ENCODE measurements at regions of chr1 and their contacts with region 1.

Region 1: GRCh38 chr1:226608699-226609505 is 60.3 kb downstream of the STUM start:
- H3K4me3 ChIP-seq: no peak overlapping the region
- H3K27ac ChIP-seq: no peak overlapping the region
- H3K4me1 ChIP-seq: no peaks in the 10 kb centered on the region
- CTCF ChIP-seq: peak; percentile 68; the same call in 1 of the 2 replicates

Region 2: DNA sequence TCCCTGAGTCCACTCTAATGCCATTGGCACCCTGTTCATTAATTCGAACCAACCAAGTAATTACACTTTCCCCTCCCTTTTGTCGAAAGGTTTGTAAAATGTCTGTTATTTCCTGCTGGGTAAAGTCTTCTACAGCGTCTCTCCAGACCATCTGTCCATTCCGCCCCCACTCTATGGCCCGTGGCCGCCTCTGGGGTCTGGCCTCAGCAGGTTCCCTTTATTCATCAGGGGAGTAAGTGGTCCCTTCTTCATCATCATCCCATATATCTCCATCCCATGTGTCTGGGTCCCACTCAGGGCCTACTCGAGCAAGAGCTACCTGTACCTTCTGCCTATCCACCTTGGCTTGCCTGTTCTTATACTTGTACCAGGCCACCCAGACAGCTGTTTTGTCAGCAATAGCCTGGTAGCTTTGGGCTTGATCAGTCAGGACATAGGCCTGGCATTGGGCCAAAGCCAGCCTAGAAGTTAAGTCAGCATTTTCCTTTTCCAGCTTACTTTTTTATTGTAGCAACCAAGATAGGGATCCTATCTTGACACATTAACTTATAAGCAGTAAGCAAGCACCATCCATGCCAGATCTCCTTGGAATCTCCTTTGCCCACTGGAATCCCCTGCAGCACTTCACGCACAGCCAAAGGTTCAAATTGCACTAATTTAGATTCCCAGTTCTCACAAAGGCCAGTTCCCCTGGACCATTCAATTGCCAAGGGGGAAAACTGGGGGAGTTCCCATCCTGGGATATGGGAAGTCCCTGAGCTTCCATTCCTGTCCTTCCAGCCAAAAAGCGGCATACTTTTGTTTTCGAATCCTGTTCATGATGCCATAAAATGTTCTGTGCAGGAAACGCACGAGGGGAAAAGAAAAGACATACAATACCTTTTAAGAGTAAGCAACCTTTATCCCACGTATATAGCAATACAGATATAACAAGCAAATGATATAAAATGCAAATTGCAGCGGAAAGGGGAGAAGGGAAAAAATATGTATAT is 67.0 kb before region 1 on chr1:
- CTCF ChIA-PET with region 1: interaction called, 84 read pairs
- POLR2A ChIA-PET with region 1: no interaction called
- H3K4me3 ChIP-seq: no peak overlapping the region
- H3K27ac ChIP-seq: no peak overlapping the region
- H3K4me1 ChIP-seq: 0 out of 2 replicates have a peak, but pooled peaks cover 4% of the 10 kb centered on the region
- CTCF ChIP-seq: no peak

Region 3: DNA sequence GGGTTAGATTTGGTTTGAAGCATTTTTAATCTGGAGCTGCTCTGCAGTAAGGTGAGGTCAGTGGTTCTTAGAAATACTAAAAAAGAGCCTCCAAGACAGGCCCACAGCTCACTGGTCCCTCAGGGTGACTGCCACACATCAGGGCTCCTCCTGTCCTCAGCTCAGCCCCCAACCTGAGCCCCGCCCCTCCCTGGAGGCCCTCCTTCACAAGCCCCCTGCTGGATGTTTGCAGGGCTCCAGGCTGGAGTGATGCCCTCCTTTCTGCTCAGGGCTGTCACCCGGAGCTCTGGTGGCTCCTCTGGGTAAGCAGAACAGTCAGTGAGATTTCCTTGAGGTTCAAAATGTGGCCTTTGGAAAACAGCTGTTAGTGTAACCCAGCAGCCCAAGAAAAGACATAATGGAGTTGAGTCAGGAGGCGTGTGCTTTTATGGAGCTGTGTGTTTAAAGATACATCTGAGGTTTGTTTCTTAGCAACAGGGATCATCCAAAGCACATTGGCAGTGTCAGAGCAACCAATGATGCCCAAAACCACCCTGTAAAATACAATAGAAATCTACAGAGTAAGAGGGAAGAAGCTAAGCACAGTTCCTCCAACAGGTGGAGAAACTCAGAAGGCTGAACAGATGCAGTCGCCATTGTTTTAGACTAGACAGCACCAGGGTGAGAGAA is 38.9 kb before region 1 on chr1:
- CTCF ChIA-PET with region 1: interaction called, 10 read pairs
- POLR2A ChIA-PET with region 1: no interaction called
- H3K4me3 ChIP-seq: no peak overlapping the region
- H3K27ac ChIP-seq: no peak overlapping the region
- H3K4me1 ChIP-seq: 0 out of 2 replicates have a peak, but pooled peaks cover 2% of the 10 kb centered on the region
- CTCF ChIP-seq: peak; percentile 76; the same call in 1 of the 2 replicates

Region 4: GRCh38 chr1:226589008-226589733 is 19.7 kb before region 1 on chr1:
- CTCF ChIA-PET with region 1: interaction called, 21 read pairs
- POLR2A ChIA-PET with region 1: no interaction called
- H3K4me3 ChIP-seq: no peak overlapping the region
- H3K27ac ChIP-seq: no peak overlapping the region
- H3K4me1 ChIP-seq: no peaks in the 10 kb centered on the region
- CTCF ChIP-seq: no peak

Region 5: DNA sequence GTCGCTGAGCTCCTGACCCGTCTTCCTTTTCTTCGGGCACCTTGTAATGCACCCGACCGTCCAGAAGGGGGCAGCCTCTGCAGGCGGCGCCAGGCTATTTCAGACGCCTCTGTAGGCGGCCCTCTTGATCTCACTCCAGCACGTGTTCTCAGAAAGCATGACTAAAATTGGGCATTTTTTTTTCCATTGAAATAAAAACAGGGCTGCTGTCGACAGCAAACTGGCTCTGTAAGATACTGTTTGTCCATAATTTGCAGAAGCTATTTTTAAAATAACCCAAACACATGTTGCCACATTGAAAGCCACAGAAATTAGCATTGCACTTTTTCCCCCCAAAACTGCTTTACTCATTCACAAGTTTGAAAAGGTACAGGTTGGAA is 17.7 kb after region 1 on chr1:
- CTCF ChIA-PET with region 1: interaction called, 18 read pairs
- POLR2A ChIA-PET with region 1: no interaction called
- H3K4me3 ChIP-seq: no peak overlapping the region
- H3K27ac ChIP-seq: no peak overlapping the region
- H3K4me1 ChIP-seq: no peaks in the 10 kb centered on the region
- CTCF ChIP-seq: peak; percentile 86

Measured in HEK293 (cell line).